ENCODE measurements at regions of chr12 and their contacts with region 1.

Region 1: DNA sequence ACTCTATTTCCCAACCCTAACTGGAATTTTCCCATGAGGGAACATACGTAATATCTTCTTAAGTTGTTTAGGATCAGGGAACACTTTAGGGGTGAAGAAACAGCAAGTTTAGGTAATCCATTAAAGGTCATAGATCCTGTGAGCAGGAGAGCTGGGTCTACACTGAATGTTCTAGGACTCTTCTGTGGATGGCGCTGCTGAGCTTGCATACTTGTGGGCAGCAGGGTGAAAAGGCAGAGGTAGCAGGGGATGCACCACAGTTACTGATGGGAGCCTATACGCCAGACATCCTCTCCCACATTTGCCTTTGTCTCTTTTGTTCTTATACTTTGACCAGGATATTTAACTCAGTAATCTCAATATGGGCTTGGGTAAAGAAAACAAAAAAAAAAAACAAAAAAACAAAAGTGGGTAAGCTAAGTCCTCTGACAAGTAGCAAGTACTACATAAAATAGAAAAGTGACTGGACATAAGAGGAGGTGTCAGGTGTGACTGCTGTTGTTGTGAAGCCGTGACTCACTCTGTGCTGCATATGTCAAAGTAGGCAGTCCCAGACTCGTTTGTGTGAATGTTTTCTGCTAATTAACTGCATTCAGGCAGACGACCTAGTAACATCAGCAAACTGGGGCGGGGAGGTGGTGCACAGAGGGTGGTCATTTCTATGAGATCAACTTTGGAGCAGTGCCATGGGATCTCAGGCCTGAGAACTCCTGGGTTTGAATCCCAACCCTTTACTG is 31.6 kb downstream of the NEUROD4 start:
- DNase-seq: peak; percentile 19
- ATAC-seq: peak; percentile 78
- H3K4me3 Mint-ChIP-seq: no peak overlapping the region
- H3K27ac Mint-ChIP-seq: peak overlapping the region; percentile 17; the same call in 1 of the 2 replicates
- H3K4me1 Mint-ChIP-seq: peaks cover 12% of the 10 kb centered on the region
- H3K27me3 Mint-ChIP-seq: no peaks in the 10 kb centered on the region; the same call in 1 of the 2 replicates
- CTCF ChIP-seq: no peak

Region 2: DNA sequence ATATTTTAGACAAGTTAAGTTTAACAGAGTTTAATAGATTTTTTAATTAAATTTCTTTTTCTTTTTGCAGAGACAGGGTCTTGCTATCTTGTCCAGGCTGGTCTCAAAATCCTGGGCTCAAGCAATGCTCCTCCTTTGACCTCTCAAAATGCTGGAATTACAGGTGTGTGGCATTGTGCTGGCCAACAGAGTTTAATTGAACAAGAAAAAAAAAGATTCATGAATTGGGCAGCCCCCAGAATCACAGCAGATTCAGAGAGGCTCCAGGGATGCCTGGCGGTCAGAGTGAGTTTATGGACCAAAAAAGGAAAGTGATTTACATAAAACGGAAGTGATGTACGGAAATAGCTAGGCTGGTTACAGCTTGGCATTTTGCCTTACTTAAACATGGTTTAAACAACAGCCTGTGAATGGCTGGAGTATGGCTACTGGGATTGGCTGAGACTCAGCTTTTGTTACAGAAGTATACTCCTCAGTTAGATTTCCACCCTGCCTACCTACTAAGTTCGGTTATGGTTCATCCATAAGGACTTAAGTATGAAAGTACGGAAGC is 52.3 kb before region 1 on chr12:
- CTCF ChIA-PET with region 1: interaction called, 12 read pairs
- POLR2A ChIA-PET with region 1: no interaction called
- DNase-seq: no peak
- ATAC-seq: no peak
- H3K4me3 Mint-ChIP-seq: no peak overlapping the region
- H3K27ac Mint-ChIP-seq: no peak overlapping the region
- H3K4me1 Mint-ChIP-seq: peaks cover 48% of the 10 kb centered on the region
- H3K27me3 Mint-ChIP-seq: no peaks in the 10 kb centered on the region
- CTCF ChIP-seq: no peak

Measured in WTC11 (cell line).